ENCODE measurements at regions of chr10 and their contacts with region 1.

Region 1: DNA sequence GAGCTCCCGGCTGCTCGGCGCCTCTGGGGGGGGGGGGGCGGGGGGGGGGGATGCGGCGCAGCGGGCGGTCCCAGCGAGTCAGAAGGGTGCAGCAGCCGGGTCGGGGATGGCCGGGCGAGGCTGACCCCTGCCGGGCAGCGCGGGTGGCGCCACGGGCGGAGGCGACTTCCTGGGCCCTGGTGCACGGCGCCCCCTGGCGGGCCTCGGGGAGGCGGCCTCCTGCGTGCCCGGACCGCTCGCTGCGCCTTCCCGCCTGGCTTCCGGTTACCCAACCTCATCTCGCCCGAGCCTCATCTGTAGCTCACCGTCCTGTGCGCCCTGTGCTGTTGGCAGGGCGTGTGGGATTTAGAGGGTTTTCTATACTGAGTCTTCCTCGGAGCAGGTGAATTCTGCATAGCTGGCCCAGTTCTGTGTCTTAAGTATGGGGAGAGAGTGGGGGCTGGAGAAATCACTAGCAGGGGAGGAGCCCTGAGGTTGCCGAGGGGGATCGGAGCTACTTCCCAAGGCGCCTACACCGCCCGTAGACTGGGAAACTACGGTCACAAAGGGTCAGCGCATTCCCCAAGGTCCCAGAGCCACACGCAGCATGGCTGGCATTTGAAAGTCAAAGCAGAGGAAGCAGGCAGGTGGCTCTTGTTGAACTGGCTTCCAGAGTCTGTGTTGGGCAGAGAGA is 28.3 kb upstream of the WDFY4 start:
- DNase-seq: peak; percentile 86
- H3K4me3 ChIP-seq: peak overlapping the region; percentile 31
- H3K27ac ChIP-seq: no peak overlapping the region
- H3K4me1 ChIP-seq: no peaks in the 10 kb centered on the region
- H3K27me3 ChIP-seq: peaks cover 33% of the 10 kb centered on the region
- CTCF ChIP-seq: peak; percentile 74

Region 2: GRCh38 chr10:48363617-48364355 is 292.6 kb before region 1 on chr10:
- CTCF ChIA-PET with region 1: interaction called, 7 read pairs
- POLR2A ChIA-PET with region 1: no interaction called
- intact Hi-C with region 1: loop called (anchors 1 kb)
- DNase-seq: peak; percentile 82
- H3K4me3 ChIP-seq: no peak overlapping the region
- H3K27ac ChIP-seq: no peak overlapping the region
- H3K4me1 ChIP-seq: peaks cover 31% of the 10 kb centered on the region
- H3K27me3 ChIP-seq: no peaks in the 10 kb centered on the region
- CTCF ChIP-seq: peak; percentile 79

Region 3: GRCh38 chr10:48551861-48552591 is 104.4 kb before region 1 on chr10:
- CTCF ChIA-PET with region 1: interaction called, 12 read pairs
- POLR2A ChIA-PET with region 1: no interaction called
- intact Hi-C with region 1: loop called (anchors 1 kb)
- DNase-seq: peak; percentile 53
- H3K4me3 ChIP-seq: no peak overlapping the region
- H3K27ac ChIP-seq: no peak overlapping the region
- H3K4me1 ChIP-seq: no peaks in the 10 kb centered on the region
- H3K27me3 ChIP-seq: no peaks in the 10 kb centered on the region
- CTCF ChIP-seq: peak; percentile 74

Region 4: GRCh38 chr10:49164559-49165188 is 508.3 kb after region 1 on chr10:
- CTCF ChIA-PET with region 1: interaction called, 11 read pairs
- POLR2A ChIA-PET with region 1: no interaction called
- intact Hi-C with region 1: loop called (anchors 1 kb)
- DNase-seq: peak; percentile 47
- H3K4me3 ChIP-seq: no peak overlapping the region
- H3K27ac ChIP-seq: no peak overlapping the region
- H3K4me1 ChIP-seq: no peaks in the 10 kb centered on the region
- H3K27me3 ChIP-seq: peaks cover 1% of the 10 kb centered on the region
- CTCF ChIP-seq: peak; percentile 70

Region 5: GRCh38 chr10:49518982-49519578 is 862.7 kb after region 1 on chr10:
- CTCF ChIA-PET with region 1: interaction called, 5 read pairs
- POLR2A ChIA-PET with region 1: no interaction called
- intact Hi-C with region 1: loop called (anchors 1 kb)
- DNase-seq: peak; percentile 67
- H3K4me3 ChIP-seq: no peak overlapping the region
- H3K27ac ChIP-seq: no peak overlapping the region
- H3K4me1 ChIP-seq: no peaks in the 10 kb centered on the region
- H3K27me3 ChIP-seq: no peaks in the 10 kb centered on the region
- CTCF ChIP-seq: peak; percentile 74

Measured in A673 (cell line).